SK-N-SH (cell line): ENCODE measurements at regions of chr6 and their contacts with region 1.

Region 1: GRCh38 chr6:32984605-32985389 is 16.4 kb downstream of the BRD2 start:
- DNase-seq: peak; percentile 79
- H3K4me3 ChIP-seq: no peak overlapping the region; a peak in 1 of 4 replicates
- H3K27ac ChIP-seq: no peak overlapping the region; a peak in 1 of 4 replicates
- H3K4me1 ChIP-seq: no peaks in the 10 kb centered on the region; a peak in 2 of 4 replicates
- H3K27me3 ChIP-seq: no peaks in the 10 kb centered on the region
- CTCF ChIP-seq: peak; percentile 87
- EP300 ChIP-seq: no peak
- RAD21 ChIP-seq: peak; percentile 95

Region 2: DNA sequence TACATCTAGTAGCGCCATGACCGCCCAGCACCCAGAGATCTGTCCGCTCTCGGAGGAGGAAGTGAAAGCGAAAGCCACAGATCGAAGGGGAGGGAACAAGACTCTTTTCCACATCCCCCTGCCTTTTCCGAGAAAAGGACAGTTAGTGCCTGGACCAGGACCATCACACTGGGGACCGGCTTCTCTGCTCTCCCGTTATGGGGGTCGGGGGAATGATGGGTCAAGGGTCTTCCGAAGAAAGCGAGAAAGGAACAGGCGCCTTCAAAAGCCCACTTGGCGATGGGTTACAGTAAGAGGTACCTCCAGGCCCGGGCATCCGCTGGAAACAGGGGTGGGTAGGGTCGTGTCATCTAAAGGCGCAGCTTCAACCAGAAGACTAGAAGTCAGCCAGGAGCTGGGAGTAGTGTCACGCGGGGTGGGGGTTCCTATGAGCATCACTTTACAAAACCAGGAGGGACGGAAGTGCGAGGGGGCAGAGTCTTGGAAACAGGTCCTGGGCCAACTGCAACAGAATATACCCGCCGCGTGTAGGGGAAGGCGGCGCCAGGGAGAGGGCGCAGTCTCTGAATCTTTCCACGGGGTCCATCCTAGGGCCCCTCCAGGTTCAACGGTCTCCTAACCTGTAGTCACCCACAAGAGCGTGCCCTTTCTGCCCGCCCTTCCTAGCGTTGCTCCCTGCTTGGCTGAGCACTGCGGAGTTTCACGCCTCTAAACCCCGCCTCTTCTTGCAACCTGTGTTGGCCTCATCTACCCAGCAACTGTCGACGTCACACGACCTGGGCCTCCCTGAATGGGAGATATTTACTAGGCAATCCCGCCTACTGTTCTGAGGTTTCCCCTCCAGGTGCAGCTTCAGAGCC is 140.6 kb before region 1 on chr6 and contains the start of gene PSMB8:
- CTCF ChIA-PET with region 1: interaction called, 12 read pairs
- POLR2A ChIA-PET with region 1: no interaction called
- DNase-seq: peak; percentile 94
- H3K4me3 ChIP-seq: peak within 1 kb of the TSS; percentile 71 to 72
- H3K27ac ChIP-seq: peak within 1 kb of the TSS; percentile 53 to 57
- H3K4me1 ChIP-seq: peaks cover 0 to 13% of the 10 kb centered on the region in 2 experiments; a peak in 1 of 4 replicates
- H3K27me3 ChIP-seq: no peaks in the 10 kb centered on the region
- CTCF ChIP-seq: peak; percentile 28; the same call in 1 of the 2 replicates
- EP300 ChIP-seq: no peak
- RAD21 ChIP-seq: no peak
- polyA plus RNA-seq, gene PSMB8: 52.8 and 55.7 TPM in 2 replicates

Region 3: GRCh38 chr6:32894080-32895005 is 90.5 kb before region 1 on chr6:
- CTCF ChIA-PET with region 1: interaction called, 35 read pairs
- POLR2A ChIA-PET with region 1: interaction called, 3 read pairs
- DNase-seq: peak; percentile 98
- H3K4me3 ChIP-seq: peak overlapping the region; percentile 73 to 90
- H3K27ac ChIP-seq: peak overlapping the region; percentile 73 to 92
- H3K4me1 ChIP-seq: peaks cover 0 to 8% of the 10 kb centered on the region in 2 experiments; a peak in 2 of 4 replicates
- H3K27me3 ChIP-seq: no peaks in the 10 kb centered on the region
- CTCF ChIP-seq: peak; percentile 35
- EP300 ChIP-seq: no peak
- RAD21 ChIP-seq: no peak

Region 4: GRCh38 chr6:32920715-32921114 is 64.1 kb before region 1 on chr6:
- CTCF ChIA-PET with region 1: interaction called, 23 read pairs
- POLR2A ChIA-PET with region 1: no interaction called
- DNase-seq: no peak
- H3K4me3 ChIP-seq: no peak overlapping the region
- H3K27ac ChIP-seq: no peak overlapping the region
- H3K4me1 ChIP-seq: no peaks in the 10 kb centered on the region
- H3K27me3 ChIP-seq: peaks cover 26% of the 10 kb centered on the region; the same call in 1 of the 2 replicates
- CTCF ChIP-seq: no peak
- EP300 ChIP-seq: no peak
- RAD21 ChIP-seq: no peak

Region 5: DNA sequence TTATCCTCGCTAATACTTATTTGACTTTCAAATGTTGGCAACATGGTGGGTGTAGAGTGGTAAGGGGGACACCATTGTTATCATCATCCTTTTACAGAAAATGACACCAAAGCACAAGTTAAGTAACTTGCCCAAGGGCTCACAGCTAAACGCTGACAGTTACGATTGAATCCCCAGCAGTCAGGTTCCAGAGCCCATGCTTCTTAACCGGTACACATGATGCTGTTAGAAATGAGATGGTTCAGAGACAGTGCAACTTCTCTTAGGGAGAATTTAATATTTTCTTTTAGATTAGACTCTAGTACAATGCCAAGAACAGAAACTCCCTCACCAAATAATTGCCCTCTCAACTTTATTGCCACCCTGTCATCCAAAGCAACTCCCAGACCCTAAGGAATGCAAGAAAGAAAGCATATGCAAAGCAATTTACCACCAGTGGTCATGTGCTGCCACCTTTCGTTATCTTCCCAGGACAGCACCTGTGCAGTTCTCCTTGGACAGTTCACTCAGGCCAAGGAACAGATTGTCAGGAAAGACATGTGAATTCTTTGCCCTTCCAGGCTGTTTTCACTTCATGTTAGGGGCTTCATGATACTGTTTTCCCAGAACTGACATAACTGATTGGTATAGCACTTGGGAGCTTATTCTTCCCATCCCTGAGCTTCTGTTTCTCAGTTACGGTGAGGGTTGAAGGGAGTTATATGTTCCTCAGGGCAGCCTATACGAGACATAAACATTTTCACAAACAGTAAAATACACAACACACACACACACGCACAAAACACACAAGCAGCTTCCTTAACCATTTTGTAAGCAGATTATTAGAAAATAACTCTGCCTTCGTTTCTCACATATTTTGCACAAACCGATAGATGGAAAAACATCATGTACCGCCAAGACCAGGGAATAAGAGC is 37.0 kb before region 1 on chr6:
- CTCF ChIA-PET with region 1: interaction called, 391 read pairs
- POLR2A ChIA-PET with region 1: no interaction called
- DNase-seq: peak; percentile 21
- H3K4me3 ChIP-seq: no peak overlapping the region
- H3K27ac ChIP-seq: no peak overlapping the region
- H3K4me1 ChIP-seq: peaks cover 0 to 2% of the 10 kb centered on the region in 2 experiments; a peak in 1 of 4 replicates
- H3K27me3 ChIP-seq: peaks cover 14% of the 10 kb centered on the region; the same call in 1 of the 2 replicates
- CTCF ChIP-seq: peak; percentile 61
- EP300 ChIP-seq: no peak
- RAD21 ChIP-seq: peak; percentile 74

Region 6: GRCh38 chr6:32971581-32972352 is 13.0 kb before region 1 on chr6:
- CTCF ChIA-PET with region 1: interaction called, 203 read pairs
- POLR2A ChIA-PET with region 1: interaction called, 42 read pairs
- DNase-seq: peak; percentile 92
- H3K4me3 ChIP-seq: peak overlapping the region; percentile 83 to 88
- H3K27ac ChIP-seq: peak overlapping the region; percentile 97 to 99
- H3K4me1 ChIP-seq: peaks cover 21 to 28% of the 10 kb centered on the region in 2 experiments; a peak in 3 of 4 replicates
- H3K27me3 ChIP-seq: no peaks in the 10 kb centered on the region
- CTCF ChIP-seq: no peak
- EP300 ChIP-seq: peak; percentile 7 to 55; a peak in 2 of 4 replicates
- RAD21 ChIP-seq: no peak

Region 7: DNA sequence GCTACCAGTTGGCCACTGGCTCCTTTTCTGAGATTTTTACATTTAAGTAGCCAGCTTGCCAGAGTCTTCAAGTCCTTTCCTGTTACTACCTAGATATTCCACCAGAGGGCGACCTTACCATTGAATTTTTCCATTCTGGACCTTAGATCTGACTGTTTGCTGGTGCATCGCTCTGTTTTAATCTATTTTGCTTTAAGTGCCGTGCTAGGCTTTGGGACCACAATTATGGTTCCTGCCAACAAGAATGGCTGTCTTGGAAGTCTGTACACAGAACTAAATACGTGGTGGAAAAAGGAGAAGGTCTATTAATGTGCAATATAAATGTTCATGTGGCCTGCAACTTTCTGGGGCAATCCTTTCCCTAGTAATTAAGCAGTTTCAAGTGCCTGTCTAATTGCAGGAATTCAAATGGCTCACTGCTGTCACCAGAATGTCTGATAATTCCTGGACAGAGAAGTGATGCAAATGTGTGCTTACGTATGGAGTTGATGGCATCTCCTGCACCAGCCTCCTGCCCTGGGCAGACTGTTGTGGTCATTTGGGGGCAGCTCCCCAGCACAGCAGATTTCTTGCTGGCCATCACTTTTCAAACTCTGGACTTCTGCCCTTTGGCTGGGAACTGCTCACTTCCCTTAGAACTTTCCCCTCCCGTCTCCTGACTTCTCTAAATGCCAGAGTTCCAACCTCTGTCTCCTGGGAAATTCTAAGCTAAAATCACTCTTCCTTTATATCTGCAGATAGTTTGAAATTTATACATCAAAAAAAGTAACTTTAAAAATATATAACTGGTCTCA is 30.2 kb after region 1 on chr6:
- CTCF ChIA-PET with region 1: interaction called, 30 read pairs
- POLR2A ChIA-PET with region 1: no interaction called
- DNase-seq: peak; percentile 71
- H3K4me3 ChIP-seq: no peak overlapping the region; a peak in 1 of 4 replicates
- H3K27ac ChIP-seq: no peak overlapping the region
- H3K4me1 ChIP-seq: no peaks in the 10 kb centered on the region; a peak in 1 of 4 replicates
- H3K27me3 ChIP-seq: peaks cover 72% of the 10 kb centered on the region
- CTCF ChIP-seq: peak; percentile 75
- EP300 ChIP-seq: no peak
- RAD21 ChIP-seq: peak; percentile 78

Region 8: GRCh38 chr6:33036535-33036934 is 51.7 kb after region 1 on chr6:
- CTCF ChIA-PET with region 1: no interaction called
- POLR2A ChIA-PET with region 1: no interaction called
- DNase-seq: no peak
- H3K4me3 ChIP-seq: no peak overlapping the region
- H3K27ac ChIP-seq: no peak overlapping the region
- H3K4me1 ChIP-seq: no peaks in the 10 kb centered on the region
- H3K27me3 ChIP-seq: peaks cover 13% of the 10 kb centered on the region; the same call in 1 of the 2 replicates
- CTCF ChIP-seq: no peak
- EP300 ChIP-seq: no peak
- RAD21 ChIP-seq: no peak